SK-N-SH (cell line): ENCODE measurements at regions of chr14 and their contacts with region 1.

Region 1: GRCh38 chr14:22852940-22853767 is 16.8 kb downstream of the MMP14 start:
- DNase-seq: peak; percentile 85
- H3K4me3 ChIP-seq: peak overlapping the region; percentile 52 to 63
- H3K27ac ChIP-seq: no peak overlapping the region; a peak in 1 of 4 replicates
- H3K4me1 ChIP-seq: peaks cover 25 to 30% of the 10 kb centered on the region in 2 experiments
- H3K27me3 ChIP-seq: no peaks in the 10 kb centered on the region
- CTCF ChIP-seq: peak; percentile 92
- EP300 ChIP-seq: no peak
- RAD21 ChIP-seq: peak; percentile 97

Region 2: DNA sequence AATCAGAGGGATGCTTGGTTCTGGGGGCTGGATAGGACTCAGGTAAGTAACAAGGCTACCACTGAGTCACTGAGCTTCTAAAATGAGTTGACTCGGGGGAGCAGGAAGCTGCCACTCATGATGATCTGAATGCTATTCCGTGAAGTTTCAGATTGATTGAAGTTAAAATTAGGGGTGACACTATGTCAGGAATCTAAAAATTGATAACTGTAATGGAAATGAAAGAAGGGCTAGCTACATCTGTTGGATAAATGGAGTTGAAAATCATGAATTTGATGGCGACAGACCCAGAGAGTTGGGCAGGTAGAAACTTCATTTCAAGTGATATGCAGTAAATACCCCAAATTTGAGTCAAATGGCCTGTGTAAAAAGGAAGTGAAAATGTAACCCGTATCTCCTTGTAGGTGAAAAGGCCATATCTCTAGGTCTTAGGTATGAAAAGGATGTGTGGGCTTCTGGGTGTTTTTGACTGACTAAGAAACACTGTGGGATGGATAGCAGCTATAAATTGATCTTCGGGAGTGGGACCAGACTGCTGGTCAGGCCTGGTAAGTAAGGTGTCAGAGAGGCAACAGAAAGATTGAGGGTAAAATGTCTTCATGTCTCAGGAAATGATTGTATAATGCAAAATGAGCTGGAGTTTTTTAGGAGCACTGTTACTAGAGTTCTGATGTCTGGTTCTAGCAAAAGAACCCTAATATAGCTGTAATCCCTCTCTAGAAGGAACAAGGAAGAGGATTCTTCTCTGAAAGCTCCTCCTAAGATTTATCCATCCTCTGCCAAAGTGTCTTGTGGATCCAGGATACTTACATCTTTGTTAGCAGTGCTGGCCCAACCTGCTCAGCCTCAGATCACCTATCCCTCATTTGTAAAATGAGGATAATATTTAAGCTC is 321.5 kb before region 1 on chr14:
- CTCF ChIA-PET with region 1: interaction called, 12 read pairs
- POLR2A ChIA-PET with region 1: no interaction called
- DNase-seq: no peak
- H3K4me3 ChIP-seq: no peak overlapping the region
- H3K27ac ChIP-seq: peak overlapping the region in 1 of 2 experiments; percentile 32; a peak in 1 of 4 replicates
- H3K4me1 ChIP-seq: peaks cover 0 to 18% of the 10 kb centered on the region in 2 experiments; a peak in 2 of 4 replicates
- H3K27me3 ChIP-seq: no peaks in the 10 kb centered on the region; the same call in 1 of the 2 replicates
- CTCF ChIP-seq: no peak
- EP300 ChIP-seq: no peak
- RAD21 ChIP-seq: no peak

Region 3: DNA sequence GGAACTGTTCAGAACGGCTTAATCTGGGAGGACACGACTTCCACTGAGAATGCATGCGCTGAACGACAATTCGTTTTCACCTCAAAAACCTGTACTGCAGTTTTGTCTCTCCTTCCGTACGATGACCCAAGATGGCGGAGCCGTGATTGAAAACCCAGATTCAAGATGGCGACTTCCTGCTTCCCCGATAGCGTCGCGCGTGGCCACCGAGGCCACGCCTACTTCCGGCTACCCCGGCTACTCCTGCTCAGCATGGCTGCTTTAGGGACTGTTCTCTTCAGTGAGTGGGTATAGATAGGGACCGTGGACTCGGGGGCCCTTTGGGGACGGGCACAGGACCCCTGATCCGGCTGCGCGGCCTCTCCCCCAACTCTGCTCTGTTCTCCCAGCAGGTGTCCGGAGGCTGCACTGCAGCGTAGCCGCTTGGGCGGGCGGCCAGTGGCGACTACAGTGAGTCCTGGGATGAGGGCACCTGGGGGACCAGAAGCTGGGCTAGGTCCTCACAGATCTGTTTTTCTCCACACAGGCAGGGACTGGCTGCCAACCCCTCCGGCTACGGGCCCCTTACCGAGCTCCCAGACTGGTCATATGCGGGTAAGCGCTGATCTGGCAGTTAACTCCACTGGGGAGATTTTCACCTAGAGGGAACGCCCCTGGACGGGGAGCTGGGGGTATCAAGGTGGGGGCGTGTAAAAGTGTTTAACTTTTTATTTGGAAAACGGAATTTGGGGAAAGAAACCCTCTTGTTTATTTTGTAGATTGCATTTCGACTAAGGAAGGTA is 23.3 kb before region 1 on chr14 and contains the start of gene MRPL52:
- CTCF ChIA-PET with region 1: interaction called, 472 read pairs
- POLR2A ChIA-PET with region 1: interaction called, 16 read pairs
- DNase-seq: peak; percentile 93
- H3K4me3 ChIP-seq: peak within 1 kb of the TSS; percentile 75 to 87
- H3K27ac ChIP-seq: peak within 1 kb of the TSS; percentile 45 to 62; a peak in 2 of 4 replicates
- H3K4me1 ChIP-seq: no peaks in the 10 kb centered on the region; a peak in 1 of 4 replicates
- H3K27me3 ChIP-seq: no peaks in the 10 kb centered on the region
- CTCF ChIP-seq: no peak
- EP300 ChIP-seq: no peak
- RAD21 ChIP-seq: no peak
- polyA plus RNA-seq, gene MRPL52: 80.8 and 116 TPM in 2 replicates

Region 4: DNA sequence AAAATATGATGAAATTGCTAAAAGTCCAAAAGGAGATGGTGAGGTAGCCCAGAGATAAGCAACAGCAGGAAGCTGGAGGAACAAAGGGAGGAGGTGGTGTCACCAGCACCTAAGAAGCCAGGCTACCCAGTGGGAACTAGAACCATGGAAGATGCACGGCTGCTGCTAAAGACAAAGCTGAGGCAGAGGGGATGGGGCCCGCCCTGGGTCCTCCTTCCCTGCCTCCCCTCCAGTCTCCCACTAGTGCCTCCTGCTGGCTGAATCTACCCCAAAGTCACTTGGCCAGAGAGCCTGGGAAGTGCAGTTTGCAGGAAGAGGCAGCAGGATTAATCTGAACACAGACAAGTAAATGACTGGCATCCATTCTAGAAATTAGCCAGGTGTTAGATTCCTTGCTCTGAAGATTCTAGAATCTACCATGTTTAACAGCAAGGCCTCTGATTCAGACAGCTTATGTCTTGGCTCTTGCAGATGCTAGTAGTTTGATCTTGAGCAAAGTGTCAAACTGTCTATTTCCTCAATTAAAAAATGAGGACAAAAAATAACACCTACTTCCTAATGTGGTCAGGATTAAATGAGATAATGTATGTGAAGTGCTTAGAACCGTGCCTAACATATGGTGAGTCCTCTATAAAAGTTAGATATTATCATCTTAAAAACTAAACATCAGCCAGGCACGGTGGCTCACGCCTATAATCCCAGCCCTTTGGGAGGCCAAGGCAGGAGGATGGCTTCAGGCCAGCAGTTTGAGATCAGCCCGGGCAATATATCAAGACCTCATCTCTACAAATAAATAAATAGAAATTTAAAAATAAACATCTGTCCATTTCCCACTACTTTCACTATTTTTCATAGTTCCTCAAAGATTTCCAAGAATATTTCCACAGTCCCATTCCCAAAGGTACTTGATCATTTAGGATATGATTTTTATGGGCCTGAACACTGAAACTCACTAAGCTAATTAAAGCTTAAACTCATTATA is 12.6 kb after region 1 on chr14:
- CTCF ChIA-PET with region 1: interaction called, 51 read pairs
- POLR2A ChIA-PET with region 1: no interaction called
- DNase-seq: peak; percentile 29
- H3K4me3 ChIP-seq: no peak overlapping the region
- H3K27ac ChIP-seq: no peak overlapping the region
- H3K4me1 ChIP-seq: peaks cover 3 to 5% of the 10 kb centered on the region in 2 experiments; a peak in 3 of 4 replicates
- H3K27me3 ChIP-seq: no peaks in the 10 kb centered on the region
- CTCF ChIP-seq: peak; percentile 40
- EP300 ChIP-seq: no peak
- RAD21 ChIP-seq: no peak

Region 5: GRCh38 chr14:22886500-22887259 is 33.5 kb after region 1 on chr14:
- CTCF ChIA-PET with region 1: interaction called, 15 read pairs
- POLR2A ChIA-PET with region 1: interaction called, 5 read pairs
- DNase-seq: peak; percentile 93
- H3K4me3 ChIP-seq: peak overlapping the region; percentile 63 to 82
- H3K27ac ChIP-seq: peak overlapping the region; percentile 75 to 92
- H3K4me1 ChIP-seq: peaks cover 8 to 45% of the 10 kb centered on the region in 2 experiments; a peak in 2 of 4 replicates
- H3K27me3 ChIP-seq: no peaks in the 10 kb centered on the region
- CTCF ChIP-seq: peak; percentile 15; the same call in 1 of the 2 replicates
- EP300 ChIP-seq: no peak
- RAD21 ChIP-seq: no peak